Ovary (tissue), 10 donors: ENCODE measurements at regions of chr15 and their contacts with region 1.

Region 1: DNA sequence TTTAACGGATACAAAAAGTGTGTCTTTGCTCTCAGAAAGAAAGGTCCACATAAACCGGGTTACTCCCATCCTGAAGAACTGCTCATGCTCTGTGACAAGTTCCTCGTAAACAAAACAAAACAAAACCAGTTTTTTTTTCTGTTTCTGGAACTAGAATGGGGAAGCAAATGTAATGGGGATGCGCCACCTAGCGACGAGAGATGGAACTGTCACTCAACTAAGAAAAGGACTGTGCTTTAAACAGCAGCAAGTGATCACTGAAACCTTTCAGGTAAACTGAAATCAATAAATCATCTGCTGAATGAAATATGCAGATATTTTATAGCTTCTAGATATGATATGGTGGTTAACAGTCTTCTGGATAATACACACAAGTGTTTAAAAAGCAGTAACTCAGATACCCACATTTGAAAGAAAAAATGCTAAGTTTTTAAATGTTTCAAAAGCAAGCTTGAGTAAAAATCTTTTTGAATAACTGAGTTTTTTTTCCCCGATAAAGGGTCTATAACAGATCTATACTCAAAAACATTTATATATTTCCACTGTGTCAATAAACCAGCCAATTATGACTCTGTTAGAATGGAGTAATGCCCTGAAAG is 10.9 kb downstream of the TM2D3 start:
- DNase-seq: peak; percentile 50 to 82 (median 77)
- H3K4me3 ChIP-seq: no peak overlapping the region
- H3K27ac ChIP-seq: no peak overlapping the region
- H3K4me1 ChIP-seq: no peaks in the 10 kb centered on the region
- H3K27me3 ChIP-seq: no peaks in the 10 kb centered on the region
- CTCF ChIP-seq: peak; percentile 84 to 90 (median 84)
- EP300 ChIP-seq: no peak
- POLR2A ChIP-seq: no peak

Region 2: DNA sequence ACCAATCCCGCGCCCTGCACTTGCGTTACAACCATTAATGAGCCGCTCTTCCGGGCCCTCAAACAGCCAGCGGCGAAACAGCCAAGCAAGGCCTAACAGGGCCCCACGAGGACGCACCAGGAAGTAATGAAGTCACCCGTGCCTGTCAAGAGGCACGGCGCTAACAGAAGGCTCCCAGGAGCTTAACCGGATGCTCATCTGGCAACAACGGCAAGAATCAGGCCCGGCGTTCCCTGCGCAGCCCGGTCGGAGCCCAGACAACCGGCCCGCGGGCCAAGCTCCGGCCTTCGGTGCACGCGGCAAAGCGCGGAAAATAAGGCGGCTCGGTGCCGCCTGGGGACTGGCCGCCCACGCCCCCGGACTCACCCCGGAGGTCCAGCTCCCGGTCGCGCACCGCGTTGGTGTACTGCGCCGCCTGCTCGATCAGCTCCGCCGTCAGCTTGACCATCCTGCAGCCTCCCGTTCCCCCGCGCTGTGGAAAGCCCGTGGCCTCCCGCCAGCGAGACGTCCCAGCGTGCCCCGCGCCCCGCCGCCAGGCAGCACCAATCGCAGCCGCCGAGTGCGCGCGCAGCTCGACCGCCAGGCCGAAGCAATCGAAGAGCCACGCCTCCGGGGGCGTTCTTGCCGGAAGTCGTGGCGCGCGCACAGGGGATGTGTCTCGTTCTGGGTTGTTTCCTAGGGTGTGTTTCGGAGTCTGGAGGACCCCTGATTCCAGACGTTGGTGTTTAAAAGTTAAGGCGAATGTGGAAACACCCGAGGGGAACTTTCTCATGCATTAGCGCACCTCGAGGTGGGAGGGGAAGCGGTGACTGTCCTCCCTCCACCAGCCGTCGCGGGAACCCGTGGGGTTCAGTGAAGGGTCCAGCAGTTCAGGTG is 346.3 kb before region 1 on chr15 and contains the start of gene SNRPA1:
- intact Hi-C with region 1: loop called in 3 of 4 experiments (anchors 2 to 5 kb)
- DNase-seq: peak; percentile 98 to 99 (median 99)
- H3K4me3 ChIP-seq: peak within 1 kb of the TSS; percentile 94
- H3K27ac ChIP-seq: peak within 1 kb of the TSS; percentile 59 to 91
- H3K4me1 ChIP-seq: peaks cover 9% of the 10 kb centered on the region
- H3K27me3 ChIP-seq: no peaks in the 10 kb centered on the region
- CTCF ChIP-seq: peak in 2 of 3 donors; percentile 18 to 25
- EP300 ChIP-seq: no peak
- POLR2A ChIP-seq: peak; percentile 78
- total RNA-seq, gene SNRPA1: 18.6 to 55.1 (median 39.9) TPM